CD14-positive monocyte (primary cell): ENCODE measurements at regions of chr18 and their contacts with region 1.

Region 1: DNA sequence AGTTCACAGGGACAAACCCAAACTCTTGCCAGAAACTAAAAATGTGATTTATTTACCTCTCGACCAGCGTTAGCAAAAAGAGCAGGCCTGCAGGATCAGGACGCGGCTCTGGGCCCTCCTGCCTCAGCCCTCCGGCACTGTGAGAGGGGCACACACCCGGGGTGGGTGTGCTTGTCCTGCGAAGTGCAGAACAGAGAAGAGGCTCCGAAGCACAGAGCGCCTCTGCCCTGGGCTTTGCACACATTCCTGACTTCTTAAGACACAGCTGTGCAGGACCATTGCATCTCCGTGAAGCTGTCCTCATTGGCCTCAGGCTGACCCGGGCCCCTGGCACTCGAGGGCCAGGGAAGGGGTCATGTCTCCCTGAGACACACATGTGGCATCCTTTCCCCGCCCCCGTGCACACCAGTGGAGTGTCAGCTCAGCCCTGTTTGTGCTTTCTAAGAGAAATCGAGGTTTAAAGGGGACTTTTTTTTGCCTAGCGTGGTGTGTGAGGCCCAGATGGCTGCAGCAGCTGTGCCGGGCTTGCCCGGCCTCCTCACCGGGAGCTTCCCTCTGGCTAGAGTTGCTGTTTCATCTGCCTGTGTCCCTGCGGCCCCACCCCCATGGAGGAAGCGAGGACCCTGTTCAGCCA is 9.9 kb upstream of the NFATC1 start:
- DNase-seq: no peak
- H3K4me3 ChIP-seq: no peak overlapping the region
- H3K4me3 Mint-ChIP-seq: no peak overlapping the region
- H3K27ac ChIP-seq: no peak overlapping the region
- H3K27ac Mint-ChIP-seq: no peak overlapping the region
- H3K4me1 ChIP-seq: no peaks in the 10 kb centered on the region
- H3K4me1 Mint-ChIP-seq: no peaks in the 10 kb centered on the region
- H3K27me3 ChIP-seq: peaks cover 23 to 32% of the 10 kb centered on the region in 2 donors
- H3K27me3 Mint-ChIP-seq: peaks cover 29 to 48% (median 38%) of the 10 kb centered on the region in 3 donors
- CTCF ChIP-seq: no peak

Region 2: DNA sequence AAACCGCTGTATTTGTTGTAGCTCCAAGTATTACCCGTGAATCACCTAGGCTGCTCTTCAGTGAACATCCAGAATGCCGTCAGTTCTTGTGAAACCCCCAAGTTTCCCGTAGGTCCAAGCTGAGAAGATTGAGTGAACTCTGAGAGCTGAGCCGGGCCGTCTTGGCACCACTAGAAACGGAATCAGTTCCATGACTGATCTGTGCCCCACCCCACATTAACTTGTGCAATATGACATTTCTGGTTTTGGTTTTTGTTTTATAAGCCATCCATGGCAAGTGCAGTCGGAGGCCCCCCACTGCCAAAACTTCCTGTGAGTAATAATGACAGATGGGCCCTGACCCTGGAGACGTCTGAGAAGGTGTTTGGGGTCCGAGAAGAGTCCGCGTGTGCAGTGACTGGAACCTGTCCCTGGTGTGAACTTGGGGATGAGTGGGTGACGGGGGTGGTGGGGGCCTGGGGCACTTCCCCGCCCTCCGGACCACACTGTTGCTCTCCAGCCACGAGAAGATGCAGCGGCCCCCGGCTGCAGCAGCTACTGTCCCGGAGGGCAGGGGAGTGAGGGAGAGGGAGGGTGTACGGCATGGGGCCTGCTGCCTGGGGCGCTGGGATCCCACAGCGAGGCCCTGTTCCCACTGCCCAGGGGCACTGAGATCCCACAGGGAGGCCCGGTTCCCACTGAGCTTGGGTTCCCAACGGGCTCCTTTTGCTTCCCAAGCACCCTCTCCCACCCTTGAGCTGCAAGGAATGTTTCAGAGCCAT is 36.4 kb after region 1 on chr18:
- intact Hi-C with region 1: loop called (anchors 5 kb)
- DNase-seq: peak; percentile 32 to 71 (median 66)
- H3K4me3 ChIP-seq: peak overlapping the region in 1 of 3 experiments; percentile 29
- H3K4me3 Mint-ChIP-seq: peak overlapping the region; percentile 47 to 59
- H3K27ac ChIP-seq: peak overlapping the region in 1 of 2 donors; percentile 69
- H3K27ac Mint-ChIP-seq: peak overlapping the region; percentile 46 to 83 (median 68)
- H3K4me1 ChIP-seq: peaks cover 9 to 17% of the 10 kb centered on the region in 2 donors
- H3K4me1 Mint-ChIP-seq: peaks cover 18% of the 10 kb centered on the region
- H3K27me3 ChIP-seq: no peaks in the 10 kb centered on the region
- H3K27me3 Mint-ChIP-seq: peaks cover 2 to 4% (median 2%) of the 10 kb centered on the region in 3 donors
- CTCF ChIP-seq: no peak